ENCODE measurements at regions of chr5 and their contacts with region 1.

Region 1: DNA sequence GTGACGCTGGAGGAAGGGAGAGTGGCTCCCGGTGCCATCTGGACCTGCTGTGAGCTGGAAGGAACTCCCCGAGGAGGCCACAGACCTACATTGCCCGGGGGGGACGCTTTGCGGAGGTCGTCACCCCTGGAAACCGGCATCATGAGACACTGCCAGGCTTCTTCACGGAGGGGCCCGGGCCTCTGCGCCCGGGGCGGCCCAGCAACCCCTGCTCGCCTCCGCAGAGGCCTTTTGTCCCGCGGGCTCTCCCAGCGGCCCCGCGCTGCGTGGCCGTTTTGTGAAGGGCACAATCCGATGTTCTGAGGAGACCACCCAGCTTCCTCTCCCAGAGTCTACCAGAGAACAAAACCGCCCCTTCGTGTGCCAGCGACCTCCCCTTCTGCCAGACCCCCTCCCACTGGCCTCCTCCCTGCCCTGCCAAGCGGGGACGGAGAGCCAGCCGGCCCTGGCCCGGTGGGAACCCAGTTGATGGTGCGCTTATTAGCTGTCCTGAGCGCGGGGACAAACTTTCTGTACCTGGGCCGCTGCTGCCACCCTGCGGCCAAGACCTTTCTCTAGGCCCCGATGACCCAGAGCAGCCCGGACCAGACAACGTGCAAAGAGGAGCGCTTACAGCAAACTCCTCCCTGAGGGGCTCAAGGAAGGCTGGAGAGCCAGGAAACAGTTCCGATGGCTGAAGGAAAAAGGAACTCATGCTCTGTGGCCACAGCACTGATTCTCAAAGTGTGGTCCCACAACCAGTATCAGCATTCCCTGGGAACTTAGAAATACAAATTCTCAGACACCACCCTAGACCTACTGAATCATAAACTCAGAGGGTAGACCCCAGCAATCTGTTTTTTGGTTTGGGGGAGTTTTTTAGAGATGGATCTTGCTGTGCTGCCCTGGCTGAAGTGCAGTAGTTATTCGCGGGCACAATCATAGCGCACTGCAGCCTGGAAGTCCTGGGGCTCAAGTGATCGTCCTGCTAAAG is 86.7 kb downstream of the SLC1A3 start:
- H3K4me3 Mint-ChIP-seq: peak overlapping the region; percentile 75
- H3K27ac Mint-ChIP-seq: peak overlapping the region; percentile 61
- H3K4me1 Mint-ChIP-seq: peaks cover 51% of the 10 kb centered on the region
- H3K27me3 Mint-ChIP-seq: no peaks in the 10 kb centered on the region

Region 2: GRCh38 chr5:36264202-36264760 is 428.8 kb before region 1 on chr5:
- intact Hi-C with region 1: loop called (anchors 2 kb)
- H3K4me3 Mint-ChIP-seq: no peak overlapping the region
- H3K27ac Mint-ChIP-seq: no peak overlapping the region
- H3K4me1 Mint-ChIP-seq: no peaks in the 10 kb centered on the region
- H3K27me3 Mint-ChIP-seq: peaks cover 2% of the 10 kb centered on the region

Region 3: DNA sequence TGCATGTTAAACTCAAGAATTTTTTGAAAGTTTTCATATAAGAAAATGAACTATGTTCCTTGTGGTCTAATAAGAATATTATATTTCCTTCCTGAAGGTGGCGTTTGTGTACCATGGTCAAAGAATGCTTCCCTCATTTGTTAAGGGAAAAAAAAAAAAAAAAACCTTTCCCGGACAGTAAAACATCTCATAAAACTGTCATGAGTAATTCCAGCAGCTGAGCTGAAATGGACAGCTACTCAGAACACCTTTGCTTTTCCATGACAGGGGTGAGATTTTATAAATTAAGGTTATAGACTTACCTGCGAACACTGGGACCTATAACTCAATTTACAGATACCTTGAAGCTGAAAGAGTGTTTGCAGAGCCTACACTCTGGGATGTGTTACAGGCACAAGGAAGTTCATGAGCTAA is 278.2 kb before region 1 on chr5:
- intact Hi-C with region 1: loop called (anchors 1 kb)
- H3K4me3 Mint-ChIP-seq: no peak overlapping the region
- H3K27ac Mint-ChIP-seq: no peak overlapping the region
- H3K4me1 Mint-ChIP-seq: peaks cover 12% of the 10 kb centered on the region
- H3K27me3 Mint-ChIP-seq: no peaks in the 10 kb centered on the region

Region 4: DNA sequence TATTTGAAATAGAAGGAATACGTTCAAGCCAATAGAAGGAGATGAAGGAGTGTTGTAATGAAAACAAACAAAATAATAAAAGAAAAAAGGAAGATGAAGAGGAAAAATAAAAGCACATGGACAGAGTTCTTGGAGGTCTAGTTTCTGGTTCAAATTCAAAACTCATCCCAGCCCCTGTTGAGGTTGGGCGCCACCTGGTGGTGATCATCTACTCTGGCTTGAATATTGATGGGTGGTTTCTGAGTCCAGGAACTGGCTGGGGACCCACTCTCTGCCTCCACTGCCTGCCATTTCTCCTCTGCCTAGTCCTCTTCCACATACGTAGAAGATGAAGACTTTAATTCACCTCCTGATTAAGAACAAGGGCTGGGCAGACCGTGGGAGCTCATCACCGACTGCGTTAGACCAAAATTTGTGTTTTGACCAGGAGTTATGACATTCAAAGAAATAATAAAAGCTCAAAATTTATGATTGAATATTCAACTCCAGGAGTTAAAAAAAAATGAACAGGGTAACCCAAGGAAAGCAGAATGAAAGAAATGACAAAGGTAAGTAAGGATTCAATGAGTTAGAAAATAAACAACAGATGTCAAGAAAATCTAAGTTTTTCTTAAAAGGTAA is 185.6 kb before region 1 on chr5:
- intact Hi-C with region 1: loop called (anchors 1 kb)
- H3K4me3 Mint-ChIP-seq: no peak overlapping the region
- H3K27ac Mint-ChIP-seq: no peak overlapping the region
- H3K4me1 Mint-ChIP-seq: no peaks in the 10 kb centered on the region
- H3K27me3 Mint-ChIP-seq: peaks cover 2% of the 10 kb centered on the region

Region 5: DNA sequence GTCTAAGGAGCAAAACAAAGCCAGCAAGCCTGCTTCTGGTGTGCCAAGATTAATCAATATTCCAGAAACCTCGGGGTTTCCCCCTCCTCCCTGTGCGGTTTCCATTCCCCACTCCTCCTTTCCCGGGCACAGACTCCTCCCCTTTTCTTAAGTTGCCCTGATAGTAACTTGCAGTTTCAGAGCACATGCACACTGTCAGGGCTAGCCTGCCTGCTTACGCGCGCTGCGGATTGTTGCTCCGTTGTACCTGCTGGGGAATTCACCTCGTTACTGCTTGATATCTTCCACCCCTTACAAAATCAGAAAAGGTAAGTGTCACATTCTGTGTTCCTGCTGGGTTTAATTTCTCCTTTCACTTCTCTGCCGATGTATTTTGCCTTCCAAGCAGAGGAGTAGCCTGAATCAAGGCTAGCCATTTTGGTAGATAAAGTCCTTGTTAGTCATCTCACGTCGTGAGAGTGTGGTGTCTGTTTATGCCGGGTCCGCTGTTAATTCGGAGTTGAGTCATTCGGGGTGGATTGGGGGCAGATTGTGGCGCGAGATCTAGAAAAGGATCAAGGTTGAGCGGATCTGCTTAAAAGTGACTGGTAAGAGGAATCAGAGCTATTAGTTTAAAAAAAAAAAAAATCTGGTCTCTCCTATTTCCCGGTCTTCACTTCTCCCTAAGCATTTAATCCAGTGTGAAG is 86.5 kb before region 1 on chr5 and contains the start of gene SLC1A3:
- intact Hi-C with region 1: loop called (anchors 2 kb)
- H3K4me3 Mint-ChIP-seq: peak within 1 kb of the TSS; percentile 91
- H3K27ac Mint-ChIP-seq: peak within 1 kb of the TSS; percentile 92
- H3K4me1 Mint-ChIP-seq: peaks cover 19% of the 10 kb centered on the region
- H3K27me3 Mint-ChIP-seq: no peaks in the 10 kb centered on the region

Measured in dendritic cell treated with granulocyte-macrophage colony-stimulating factor and Interleukin-4, amounts not matched to agents 40 ng/mL and 50 ng/mL, for 4 days (primary cell).